ENCODE measurements at regions of chr2 and their contacts with region 1.

Region 1: GRCh38 chr2:66212770-66213169 is 222.2 kb upstream of the MEIS1 start:
- DNase-seq: no peak
- ATAC-seq: no peak
- H3K4me3 ChIP-seq: no peak overlapping the region
- H3K4me3 Mint-ChIP-seq: no peak overlapping the region
- H3K27ac ChIP-seq: no peak overlapping the region
- H3K27ac Mint-ChIP-seq: no peak overlapping the region
- H3K4me1 ChIP-seq: no peaks in the 10 kb centered on the region
- H3K4me1 Mint-ChIP-seq: no peaks in the 10 kb centered on the region
- H3K27me3 ChIP-seq: no peaks in the 10 kb centered on the region
- H3K27me3 Mint-ChIP-seq: no peaks in the 10 kb centered on the region
- CTCF ChIP-seq: no peak

Region 2: DNA sequence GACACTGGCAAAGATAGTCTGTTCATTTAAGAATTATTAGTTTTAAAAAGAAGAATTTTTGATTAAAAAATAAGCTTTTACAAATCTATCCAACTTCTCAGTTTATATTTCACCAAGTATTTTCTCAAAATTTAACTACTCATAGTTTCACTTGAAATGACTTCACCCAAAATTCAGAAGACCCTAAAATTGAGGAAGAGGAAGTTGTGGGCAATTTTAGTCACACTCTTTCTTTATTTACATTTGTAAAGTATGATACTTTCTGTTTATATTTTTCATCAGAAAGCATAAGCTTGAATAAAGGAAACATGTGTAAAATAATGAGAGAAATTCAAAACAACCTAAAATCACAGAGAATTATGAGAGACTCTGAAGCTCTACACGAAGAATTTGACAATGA is 56.6 kb before region 1 on chr2:
- CTCF ChIA-PET with region 1: no interaction called
- POLR2A ChIA-PET with region 1: no interaction called
- intact Hi-C with region 1: no loop called
- DNase-seq: no peak
- ATAC-seq: no peak
- H3K4me3 ChIP-seq: no peak overlapping the region
- H3K4me3 Mint-ChIP-seq: no peak overlapping the region
- H3K27ac ChIP-seq: no peak overlapping the region
- H3K27ac Mint-ChIP-seq: no peak overlapping the region
- H3K4me1 ChIP-seq: no peaks in the 10 kb centered on the region
- H3K4me1 Mint-ChIP-seq: no peaks in the 10 kb centered on the region
- H3K27me3 ChIP-seq: no peaks in the 10 kb centered on the region
- H3K27me3 Mint-ChIP-seq: no peaks in the 10 kb centered on the region
- CTCF ChIP-seq: no peak

Region 3: GRCh38 chr2:67965246-67965645 is 1752.5 kb after region 1 on chr2:
- CTCF ChIA-PET with region 1: no interaction called
- POLR2A ChIA-PET with region 1: no interaction called
- intact Hi-C with region 1: loop called (anchors 5 kb)
- DNase-seq: no peak
- ATAC-seq: no peak
- H3K4me3 ChIP-seq: no peak overlapping the region
- H3K4me3 Mint-ChIP-seq: no peak overlapping the region
- H3K27ac ChIP-seq: no peak overlapping the region
- H3K27ac Mint-ChIP-seq: no peak overlapping the region
- H3K4me1 ChIP-seq: no peaks in the 10 kb centered on the region
- H3K4me1 Mint-ChIP-seq: no peaks in the 10 kb centered on the region
- H3K27me3 ChIP-seq: peaks cover 0 to 3% (median 0%) of the 10 kb centered on the region in 4 experiments
- H3K27me3 Mint-ChIP-seq: peaks cover 24% of the 10 kb centered on the region
- CTCF ChIP-seq: no peak

Measured in B cell (primary cell).